ENCODE measurements at regions of chr4 and their contacts with region 1.

Region 1: DNA sequence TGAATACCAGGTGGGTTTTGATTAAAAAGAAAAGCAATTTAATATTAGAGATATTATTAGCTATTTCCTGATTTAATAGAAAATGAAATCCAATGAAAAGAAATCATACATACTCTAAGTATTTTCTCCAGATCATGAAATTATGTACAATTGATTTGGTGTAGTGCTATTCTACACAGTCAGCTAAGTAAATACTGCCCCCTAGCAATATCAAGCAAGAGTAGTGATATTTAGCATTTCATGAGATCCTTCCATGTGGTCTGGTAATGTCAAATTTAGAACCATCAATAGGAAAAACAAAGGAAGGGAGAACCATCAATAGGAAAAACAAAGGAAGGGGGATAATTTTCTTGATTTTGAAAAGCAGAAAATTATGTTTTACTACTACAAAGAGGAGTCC is 114.6 kb downstream of the TBCK start:
- DNase-seq: peak in 1 of 4 experiments; percentile 9
- ATAC-seq: peak; percentile 80
- H3K4me3 ChIP-seq: no peak overlapping the region
- H3K27ac ChIP-seq: no peak overlapping the region
- H3K4me1 ChIP-seq: no peaks in the 10 kb centered on the region
- H3K27me3 ChIP-seq: no peaks in the 10 kb centered on the region
- CTCF ChIP-seq: peak in 1 of 3 experiments; percentile 49; a peak in 3 of 6 replicates
- EP300 ChIP-seq: no peak
- POLR2A ChIP-seq: no peak
- RAD21 ChIP-seq: peak in 1 of 2 experiments; percentile 54; a peak in 2 of 4 replicates

Region 2: DNA sequence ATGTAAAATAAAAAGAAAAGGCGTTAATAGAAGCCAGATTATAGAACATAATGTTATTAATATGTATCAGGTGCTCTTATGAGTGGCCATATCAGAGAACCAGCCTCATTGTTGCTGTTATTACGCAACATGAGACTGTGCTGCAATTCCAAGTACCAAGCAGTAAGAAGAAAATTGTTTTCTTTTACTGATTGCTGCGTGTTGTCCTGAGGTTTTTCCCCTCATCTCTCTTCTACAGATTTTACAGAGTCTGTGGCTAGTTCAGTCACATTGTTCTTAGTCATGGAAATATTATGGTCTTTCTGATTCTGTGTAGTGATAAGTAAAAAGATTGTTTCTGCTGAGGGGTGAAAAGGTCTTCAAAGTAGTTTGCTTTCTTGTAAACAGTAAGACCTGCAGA is 250.2 kb before region 1 on chr4:
- CTCF ChIA-PET with region 1: no interaction called
- POLR2A ChIA-PET with region 1: no interaction called
- in situ Hi-C with region 1: no loop called
- intact Hi-C with region 1: loop called (anchors 5 kb)
- DNase-seq: no peak
- ATAC-seq: no peak
- H3K4me3 ChIP-seq: no peak overlapping the region
- H3K27ac ChIP-seq: no peak overlapping the region
- H3K4me1 ChIP-seq: no peaks in the 10 kb centered on the region
- H3K27me3 ChIP-seq: no peaks in the 10 kb centered on the region; a peak in 1 of 5 replicates
- CTCF ChIP-seq: no peak
- EP300 ChIP-seq: no peak
- POLR2A ChIP-seq: no peak
- RAD21 ChIP-seq: no peak

Region 3: DNA sequence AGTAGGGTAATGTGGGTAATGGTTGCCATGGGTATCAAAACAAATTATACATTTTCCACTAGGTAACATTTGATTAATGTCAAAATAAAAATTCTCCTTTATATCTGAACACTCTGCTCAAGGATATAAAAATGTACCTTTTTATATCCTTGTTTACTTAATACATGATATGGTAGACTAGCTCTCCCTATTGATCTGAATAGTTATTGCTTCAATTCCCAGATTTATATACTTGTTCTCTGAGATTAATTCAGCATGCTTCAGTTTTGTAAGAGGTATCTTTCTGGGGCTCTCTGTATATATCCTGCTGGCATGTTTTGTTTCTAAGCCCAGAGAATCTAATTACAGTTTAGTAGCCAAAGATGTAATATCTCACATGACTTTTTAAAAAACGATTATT is 136.4 kb before region 1 on chr4:
- CTCF ChIA-PET with region 1: no interaction called
- POLR2A ChIA-PET with region 1: no interaction called
- in situ Hi-C with region 1: no loop called
- intact Hi-C with region 1: no loop called
- DNase-seq: no peak
- ATAC-seq: no peak
- H3K4me3 ChIP-seq: no peak overlapping the region
- H3K27ac ChIP-seq: no peak overlapping the region
- H3K4me1 ChIP-seq: no peaks in the 10 kb centered on the region
- H3K27me3 ChIP-seq: no peaks in the 10 kb centered on the region
- CTCF ChIP-seq: no peak
- EP300 ChIP-seq: no peak
- POLR2A ChIP-seq: no peak
- RAD21 ChIP-seq: no peak